ENCODE measurements at regions of chr12 and their contacts with region 1.

Region 1: GRCh38 chr12:53476769-53477209 is 22.5 kb downstream of the MAP3K12 start:
- DNase-seq: no peak
- ATAC-seq: peak; percentile 43
- H3K4me3 Mint-ChIP-seq: no peak overlapping the region
- H3K27ac Mint-ChIP-seq: peak overlapping the region; percentile 55
- H3K4me1 Mint-ChIP-seq: peaks cover 45% of the 10 kb centered on the region
- H3K27me3 Mint-ChIP-seq: no peaks in the 10 kb centered on the region

Region 2: DNA sequence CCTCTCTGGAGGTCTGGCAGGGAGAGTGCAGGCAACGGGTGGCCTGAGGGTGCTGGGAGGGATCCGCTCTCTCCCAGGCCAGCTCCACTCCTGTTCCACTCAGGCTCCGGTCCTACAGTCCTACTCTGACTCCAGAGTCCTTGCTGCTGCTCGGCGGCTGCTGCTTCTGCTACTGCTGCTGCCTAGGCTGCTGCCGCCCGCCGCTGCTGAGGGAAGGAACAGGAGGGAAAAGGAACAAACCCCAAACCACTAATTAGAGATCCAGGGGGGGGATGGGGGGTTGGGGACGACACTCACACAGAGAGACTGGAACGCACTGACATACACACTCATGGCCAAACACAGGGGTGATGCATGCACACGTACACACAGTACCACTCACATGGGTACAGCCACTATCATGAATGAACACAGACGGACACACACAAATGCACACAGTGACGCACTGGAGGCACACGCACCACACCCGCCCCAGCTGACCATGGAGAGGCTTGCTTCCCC is 140.6 kb before region 1 on chr12 and contains the start of gene SP7:
- CTCF ChIA-PET with region 1: no interaction called
- POLR2A ChIA-PET with region 1: no interaction called
- intact Hi-C with region 1: no loop called
- DNase-seq: no peak
- ATAC-seq: peak; percentile 49
- H3K4me3 Mint-ChIP-seq: no peak within 1 kb of the TSS
- H3K27ac Mint-ChIP-seq: no peak within 1 kb of the TSS
- H3K4me1 Mint-ChIP-seq: peaks cover 17% of the 10 kb centered on the region
- H3K27me3 Mint-ChIP-seq: peaks cover 37% of the 10 kb centered on the region
- total RNA-seq, gene SP7: not detected

Region 3: GRCh38 chr12:53451661-53452158 is 25.1 kb before region 1 on chr12 and contains the start of gene PCBP2:
- CTCF ChIA-PET with region 1: interaction called, 32 read pairs
- POLR2A ChIA-PET with region 1: interaction called, 18 read pairs
- intact Hi-C with region 1: loop called (anchors 2 kb)
- DNase-seq: peak; percentile 99
- ATAC-seq: peak; percentile 97
- H3K4me3 Mint-ChIP-seq: peak within 1 kb of the TSS; percentile 94
- H3K27ac Mint-ChIP-seq: peak within 1 kb of the TSS; percentile 96
- H3K4me1 Mint-ChIP-seq: peaks cover 27% of the 10 kb centered on the region
- H3K27me3 Mint-ChIP-seq: no peaks in the 10 kb centered on the region
- total RNA-seq, gene PCBP2: 881 to 999 TPM

Region 4: GRCh38 chr12:53465679-53466078 is 11.1 kb before region 1 on chr12:
- CTCF ChIA-PET with region 1: interaction called, 6 read pairs
- POLR2A ChIA-PET with region 1: interaction called, 36 read pairs
- intact Hi-C with region 1: no loop called
- DNase-seq: no peak
- ATAC-seq: no peak
- H3K4me3 Mint-ChIP-seq: no peak overlapping the region
- H3K27ac Mint-ChIP-seq: peak overlapping the region; percentile 15
- H3K4me1 Mint-ChIP-seq: peaks cover 30% of the 10 kb centered on the region
- H3K27me3 Mint-ChIP-seq: no peaks in the 10 kb centered on the region

Region 5: GRCh38 chr12:53500776-53501614 is 24.2 kb after region 1 on chr12 and contains the start of gene TARBP2:
- CTCF ChIA-PET with region 1: interaction called, 7 read pairs
- POLR2A ChIA-PET with region 1: interaction called, 23 read pairs
- intact Hi-C with region 1: no loop called
- DNase-seq: peak; percentile 98
- ATAC-seq: peak; percentile 84
- H3K4me3 Mint-ChIP-seq: peak within 1 kb of the TSS; percentile 81
- H3K27ac Mint-ChIP-seq: peak within 1 kb of the TSS; percentile 98
- H3K4me1 Mint-ChIP-seq: peaks cover 31% of the 10 kb centered on the region
- H3K27me3 Mint-ChIP-seq: no peaks in the 10 kb centered on the region
- total RNA-seq, gene TARBP2: 28.3 to 30.2 TPM

Region 6: DNA sequence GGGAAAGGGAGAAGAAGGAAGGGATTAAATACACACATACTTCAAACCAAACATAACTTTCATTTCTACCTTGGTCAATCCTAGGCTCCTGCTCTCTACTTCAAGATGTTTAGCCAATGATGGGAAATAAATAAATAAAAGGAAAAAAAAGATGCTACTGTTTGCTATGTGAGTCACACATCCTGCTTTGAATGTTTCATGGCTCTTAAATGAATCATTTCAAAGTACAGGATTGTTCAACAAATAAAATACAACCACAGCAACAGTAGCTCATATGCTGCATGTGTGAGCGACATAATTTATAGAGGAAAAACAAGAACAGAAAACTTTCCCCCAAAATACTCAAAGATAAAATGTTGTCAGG is 84.8 kb after region 1 on chr12:
- CTCF ChIA-PET with region 1: no interaction called
- POLR2A ChIA-PET with region 1: no interaction called
- intact Hi-C with region 1: no loop called
- DNase-seq: no peak
- ATAC-seq: peak; percentile 93
- H3K4me3 Mint-ChIP-seq: no peak overlapping the region
- H3K27ac Mint-ChIP-seq: peak overlapping the region; percentile 76
- H3K4me1 Mint-ChIP-seq: peaks cover 63% of the 10 kb centered on the region
- H3K27me3 Mint-ChIP-seq: no peaks in the 10 kb centered on the region

Region 7: GRCh38 chr12:53670299-53670698 is 193.5 kb after region 1 on chr12:
- CTCF ChIA-PET with region 1: no interaction called
- POLR2A ChIA-PET with region 1: no interaction called
- intact Hi-C with region 1: no loop called
- DNase-seq: no peak
- ATAC-seq: no peak
- H3K4me3 Mint-ChIP-seq: no peak overlapping the region
- H3K27ac Mint-ChIP-seq: peak overlapping the region; percentile 72
- H3K4me1 Mint-ChIP-seq: peaks cover 32% of the 10 kb centered on the region
- H3K27me3 Mint-ChIP-seq: no peaks in the 10 kb centered on the region

Region 8: GRCh38 chr12:53712059-53712643 is 235.4 kb after region 1 on chr12:
- CTCF ChIA-PET with region 1: no interaction called
- POLR2A ChIA-PET with region 1: no interaction called
- intact Hi-C with region 1: no loop called
- DNase-seq: no peak
- ATAC-seq: no peak
- H3K4me3 Mint-ChIP-seq: no peak overlapping the region
- H3K27ac Mint-ChIP-seq: no peak overlapping the region
- H3K4me1 Mint-ChIP-seq: no peaks in the 10 kb centered on the region
- H3K27me3 Mint-ChIP-seq: peaks cover 6% of the 10 kb centered on the region

Measured in activated CD4-positive, alpha-beta T cell treated with anti-CD3 and anti-CD28 coated beads for 36 hours (primary cell).